Mammary epithelial cell (primary cell): ENCODE measurements at regions of chr2 and their contacts with region 1.

Region 1: DNA sequence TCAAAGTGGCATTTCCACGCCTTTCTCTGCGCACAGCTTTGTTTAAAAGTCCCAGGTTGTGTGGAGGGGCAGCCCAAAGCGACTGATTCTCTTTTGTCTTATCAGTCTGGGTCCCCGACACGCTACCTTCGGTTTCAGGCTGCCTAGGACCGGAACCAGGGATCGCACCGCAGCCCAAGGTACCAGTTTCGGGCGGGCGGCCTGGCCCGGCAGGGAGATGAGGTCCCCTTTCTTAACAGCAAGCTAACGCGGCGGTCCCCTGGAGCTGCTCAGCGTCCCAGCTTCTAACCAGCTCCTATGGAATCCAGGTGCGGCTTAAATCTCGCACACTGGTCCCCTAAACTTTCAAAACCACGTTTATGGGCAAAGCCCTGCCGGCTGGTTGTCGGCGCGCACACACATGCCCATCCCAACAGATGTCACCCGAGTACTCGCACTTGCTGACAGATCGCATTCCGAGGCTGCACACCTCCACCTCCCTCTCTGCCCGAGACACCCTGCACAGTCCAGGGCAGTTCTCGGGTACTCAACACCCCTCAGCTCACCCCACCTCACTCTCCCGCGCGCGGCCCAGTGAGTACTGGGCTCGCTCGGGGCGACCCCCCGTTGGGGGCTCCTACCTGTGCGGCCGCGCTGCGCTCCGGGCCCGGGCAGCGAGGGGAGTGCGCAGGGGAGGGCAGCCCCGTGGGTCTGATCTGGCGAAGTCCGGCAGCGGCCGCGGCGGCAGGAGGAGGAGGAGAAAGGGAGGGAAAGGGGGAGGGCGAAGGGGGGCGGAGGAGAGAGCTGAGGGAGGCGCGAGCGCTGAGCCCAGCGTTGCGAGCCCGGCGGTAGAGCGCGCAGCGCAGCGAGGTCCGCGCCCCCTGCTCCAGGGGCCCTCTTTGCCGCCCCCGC is at the start of gene EFEMP1:
- DNase-seq: peak; percentile 87
- H3K4me3 ChIP-seq: peak within 1 kb of the TSS; percentile 77 to 84 (median 80)
- H3K27ac ChIP-seq: peak within 1 kb of the TSS; percentile 51
- H3K4me1 ChIP-seq: peaks cover 13% of the 10 kb centered on the region
- H3K27me3 ChIP-seq: no peaks in the 10 kb centered on the region
- CTCF ChIP-seq: peak in 1 of 2 donors; percentile 26
- total RNA-seq, gene EFEMP1: 183 to 440 TPM

Region 2: DNA sequence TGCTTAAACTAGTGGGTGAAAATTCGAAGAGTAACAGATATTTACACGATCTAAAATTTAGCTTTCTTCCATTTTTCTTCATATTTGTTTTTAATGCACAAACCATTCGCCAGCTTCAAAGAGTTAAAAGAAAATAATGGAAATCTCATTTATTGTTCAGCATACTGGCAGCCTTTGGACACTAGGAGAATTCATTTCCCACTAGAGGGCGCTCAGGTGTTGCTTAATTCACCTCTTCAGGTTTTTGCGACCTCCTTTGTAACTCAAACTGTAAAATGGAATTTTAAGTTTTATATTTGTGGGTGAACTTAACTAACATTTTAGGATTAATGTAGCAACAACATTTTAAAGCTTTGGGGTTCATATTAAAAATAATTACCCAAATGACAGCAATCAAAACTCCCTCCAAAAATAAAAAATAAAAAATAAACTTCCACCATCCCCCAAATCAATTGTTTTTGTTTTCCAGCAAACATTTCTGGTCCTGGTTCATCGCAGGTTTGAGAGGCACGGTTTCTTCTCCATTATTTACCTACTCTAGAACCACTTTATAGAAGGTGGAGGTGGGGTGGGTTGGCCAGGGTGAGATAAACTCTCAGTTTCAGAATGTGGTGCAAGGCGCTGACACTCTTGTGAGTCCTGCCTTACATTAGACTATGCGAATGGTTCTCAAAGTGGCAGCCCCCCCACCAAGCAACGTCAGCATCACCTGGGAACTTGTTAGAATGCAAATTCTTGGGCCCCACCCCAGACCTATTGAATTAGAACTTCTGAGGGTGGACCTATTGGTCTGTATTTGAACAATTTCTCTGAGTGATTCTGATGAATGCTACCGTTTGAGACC is 204.9 kb before region 1 on chr2:
- CTCF ChIA-PET with region 1: no interaction called
- dilution Hi-C with region 1: no loop called
- in situ Hi-C with region 1: no loop called
- intact Hi-C with region 1: loop called (anchors 2 kb)
- DNase-seq: peak; percentile 52
- H3K4me3 ChIP-seq: no peak overlapping the region
- H3K27ac ChIP-seq: no peak overlapping the region
- H3K4me1 ChIP-seq: peaks cover 16% of the 10 kb centered on the region
- H3K27me3 ChIP-seq: no peaks in the 10 kb centered on the region
- CTCF ChIP-seq: peak; percentile 72 to 80

Region 3: DNA sequence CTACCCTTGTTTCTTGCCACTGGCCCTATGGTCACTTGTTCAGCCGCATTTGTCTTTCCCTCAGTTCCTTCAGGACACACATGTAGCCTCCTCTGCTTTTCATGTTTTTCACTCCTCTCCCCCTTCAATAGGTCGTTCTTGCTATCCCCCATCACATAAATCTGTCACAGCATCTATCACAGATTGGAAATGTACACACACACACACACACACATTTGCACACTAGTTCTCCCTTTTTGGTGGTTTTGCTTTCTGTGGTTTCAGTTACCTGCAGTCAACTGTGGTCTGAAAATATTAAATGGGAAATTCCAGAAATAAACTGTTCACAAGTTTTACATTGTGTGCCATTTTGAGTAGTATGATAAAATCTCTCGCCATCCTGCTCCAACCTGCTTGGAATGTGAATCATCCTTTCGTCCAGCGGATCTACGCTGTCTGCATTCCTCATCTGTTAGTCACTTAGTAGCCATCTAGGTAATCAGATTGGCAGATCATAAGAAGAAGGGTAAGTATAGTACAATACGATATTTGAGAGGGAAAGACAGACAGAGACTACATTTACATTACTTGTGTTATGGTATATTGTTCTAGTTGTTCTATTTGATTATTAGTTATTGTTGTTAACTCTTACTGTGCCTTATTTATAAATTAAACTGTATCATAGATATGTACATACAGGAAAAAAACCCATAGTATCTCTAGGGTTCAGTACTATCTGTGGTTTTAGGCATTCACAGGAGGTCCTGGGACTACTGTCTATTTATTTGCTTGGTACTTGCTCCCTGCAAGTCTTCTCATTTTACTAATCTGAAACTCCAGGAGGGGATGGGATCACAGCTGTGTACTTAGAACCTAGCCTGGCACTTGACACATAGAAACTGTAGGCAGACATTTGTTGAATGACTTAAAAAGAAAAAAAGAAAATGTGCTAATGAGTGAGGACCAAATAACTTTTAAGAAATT is 143.6 kb before region 1 on chr2:
- CTCF ChIA-PET with region 1: no interaction called
- dilution Hi-C with region 1: no loop called
- in situ Hi-C with region 1: no loop called
- intact Hi-C with region 1: loop called (anchors 2 kb)
- DNase-seq: peak; percentile 99
- H3K4me3 ChIP-seq: peak overlapping the region; percentile 15 to 41 (median 38)
- H3K27ac ChIP-seq: peak overlapping the region; percentile 68
- H3K4me1 ChIP-seq: peaks cover 30% of the 10 kb centered on the region
- H3K27me3 ChIP-seq: no peaks in the 10 kb centered on the region
- CTCF ChIP-seq: no peak

Region 4: DNA sequence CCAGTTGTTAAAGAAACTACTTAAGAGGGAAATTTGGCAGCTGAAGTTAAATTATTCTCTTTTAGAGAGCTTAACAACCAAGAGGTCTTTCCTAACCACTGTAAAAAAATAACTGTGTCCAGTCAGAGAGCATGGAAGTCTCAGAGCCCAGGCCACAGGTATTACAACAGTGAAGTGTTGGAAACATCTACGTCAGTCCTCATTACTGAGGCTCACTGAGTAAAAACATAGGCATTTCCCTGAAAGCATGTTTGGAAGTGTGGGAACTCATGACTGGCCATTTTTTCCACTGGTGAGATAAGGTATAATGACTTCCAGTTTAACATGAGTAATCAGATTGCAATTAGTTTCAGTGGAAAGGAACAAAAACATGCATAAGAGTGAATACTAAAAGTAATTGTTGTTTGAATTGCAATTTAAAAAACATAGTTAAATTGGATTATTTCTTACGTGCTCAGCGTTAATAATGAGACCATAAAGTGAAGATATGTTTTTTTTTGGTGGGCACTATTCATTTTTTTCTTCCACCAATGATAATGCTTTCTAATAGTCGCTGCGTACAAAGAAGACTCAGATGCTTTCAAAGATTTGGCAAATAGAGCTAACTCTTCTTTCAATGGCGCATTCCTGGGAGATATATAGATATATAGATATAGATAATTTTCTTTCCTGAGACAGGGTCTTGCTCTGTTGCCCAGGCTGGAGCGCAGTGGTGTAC is 60.5 kb before region 1 on chr2:
- CTCF ChIA-PET with region 1: no interaction called
- dilution Hi-C with region 1: no loop called
- in situ Hi-C with region 1: no loop called
- intact Hi-C with region 1: loop called (anchors 2 kb)
- DNase-seq: peak; percentile 99
- H3K4me3 ChIP-seq: no peak overlapping the region
- H3K27ac ChIP-seq: peak overlapping the region; percentile 93
- H3K4me1 ChIP-seq: peaks cover 26% of the 10 kb centered on the region
- H3K27me3 ChIP-seq: no peaks in the 10 kb centered on the region
- CTCF ChIP-seq: no peak

Region 5: DNA sequence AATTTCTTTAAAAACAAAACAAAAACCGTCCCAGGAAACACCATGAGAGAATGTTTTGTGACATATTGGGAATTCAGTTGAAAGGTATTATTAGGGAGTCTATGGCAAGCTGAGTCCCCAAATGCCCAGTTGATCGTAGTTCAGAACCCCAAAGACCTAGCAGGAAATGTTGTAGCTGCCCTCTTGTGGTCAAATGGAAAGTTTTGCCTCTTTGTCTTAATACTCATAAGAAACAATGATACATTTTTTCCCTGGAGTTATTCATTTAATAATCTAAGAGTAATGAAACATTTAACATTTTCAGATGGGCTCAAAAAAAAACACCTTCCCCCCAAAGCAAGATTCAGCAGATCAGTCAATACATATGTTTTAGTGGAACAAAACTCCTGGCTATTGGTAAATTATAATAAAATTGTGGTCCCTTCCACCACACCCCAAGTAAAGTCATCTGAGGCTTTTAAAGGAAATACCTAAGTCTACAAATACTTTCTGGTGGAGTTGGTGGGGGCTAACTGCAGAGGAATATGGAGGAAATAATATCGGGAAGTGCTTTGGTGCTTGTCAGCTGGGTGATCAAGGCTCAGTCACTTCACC is 38.1 kb after region 1 on chr2:
- CTCF ChIA-PET with region 1: interaction called, 3 read pairs
- dilution Hi-C with region 1: no loop called
- in situ Hi-C with region 1: no loop called
- intact Hi-C with region 1: loop called (anchors 1 kb)
- DNase-seq: peak; percentile 55
- H3K4me3 ChIP-seq: no peak overlapping the region
- H3K27ac ChIP-seq: no peak overlapping the region
- H3K4me1 ChIP-seq: peaks cover 20% of the 10 kb centered on the region
- H3K27me3 ChIP-seq: no peaks in the 10 kb centered on the region
- CTCF ChIP-seq: peak; percentile 54 to 74